Activated T-helper 1 cell treated with anti-CD3 and anti-CD28 coated beads, Interleukin-12 subunit alpha, Interleukin-12 subunit beta, Interleukin-2, Interleukin-4 antibody, amounts not matched to agents 30 ng/mL and 10 ng/mL and 1 ng/mL, durations not matched to agents 14 hours and 24 hours and 36 hours (primary cell): ENCODE measurements at regions of chr21 and their contacts with region 1.

Region 1: DNA sequence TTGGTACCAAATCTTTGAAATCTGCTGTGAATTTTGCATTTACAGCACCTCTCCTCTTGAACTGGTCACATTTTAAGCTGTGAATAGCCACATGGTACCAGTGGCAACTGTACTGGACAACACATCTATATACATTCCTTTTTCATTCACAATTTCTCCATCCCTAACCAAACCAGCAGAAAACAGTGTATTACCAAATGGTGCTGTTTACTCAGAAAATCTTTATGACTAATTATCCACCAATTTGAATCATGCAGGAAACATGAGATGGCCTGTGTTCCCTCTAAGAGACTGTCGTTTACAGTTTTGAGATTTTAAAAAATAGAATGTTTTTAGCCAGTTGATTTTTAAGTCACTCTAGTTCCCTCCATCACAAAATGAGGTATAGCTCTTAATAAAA is 17.6 kb upstream of the CCT8 start:
- DNase-seq: no peak
- H3K4me3 Mint-ChIP-seq: no peak overlapping the region
- H3K27ac Mint-ChIP-seq: peak overlapping the region; percentile 56
- H3K4me1 Mint-ChIP-seq: peaks cover 24% of the 10 kb centered on the region
- H3K27me3 Mint-ChIP-seq: peaks cover 13% of the 10 kb centered on the region

Region 2: GRCh38 chr21:28522014-28522799 is 568.8 kb before region 1 on chr21:
- intact Hi-C with region 1: no loop called
- DNase-seq: no peak
- H3K4me3 Mint-ChIP-seq: no peak overlapping the region
- H3K27ac Mint-ChIP-seq: no peak overlapping the region
- H3K4me1 Mint-ChIP-seq: peaks cover 9% of the 10 kb centered on the region
- H3K27me3 Mint-ChIP-seq: no peaks in the 10 kb centered on the region

Region 3: GRCh38 chr21:28953247-28953646 is 137.8 kb before region 1 on chr21:
- intact Hi-C with region 1: no loop called
- DNase-seq: no peak
- H3K4me3 Mint-ChIP-seq: no peak overlapping the region
- H3K27ac Mint-ChIP-seq: no peak overlapping the region
- H3K4me1 Mint-ChIP-seq: peaks cover 34% of the 10 kb centered on the region
- H3K27me3 Mint-ChIP-seq: no peaks in the 10 kb centered on the region

Region 4: DNA sequence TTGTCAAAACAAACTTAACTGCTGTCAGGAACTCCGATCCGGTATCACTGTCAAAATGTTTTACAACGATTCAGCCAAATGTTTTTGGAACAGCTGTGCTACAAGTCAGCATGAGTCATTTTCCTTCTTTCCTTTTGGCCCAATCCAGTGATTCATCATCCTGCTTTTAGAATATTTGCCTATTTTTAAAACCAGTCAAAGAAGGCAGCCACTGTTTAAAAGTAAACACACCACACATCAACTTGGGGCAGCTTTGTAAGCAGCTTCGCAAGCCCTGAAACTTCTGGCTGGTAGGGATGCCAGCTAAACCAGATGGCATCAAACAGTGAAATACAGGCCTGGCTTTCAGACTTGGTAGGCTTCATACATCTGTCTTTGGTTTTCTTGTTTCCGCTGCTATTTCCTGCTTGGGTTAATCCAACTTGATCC is 54.3 kb after region 1 on chr21:
- intact Hi-C with region 1: loop called (anchors 5 kb)
- DNase-seq: no peak
- H3K4me3 Mint-ChIP-seq: no peak overlapping the region
- H3K27ac Mint-ChIP-seq: no peak overlapping the region
- H3K4me1 Mint-ChIP-seq: peaks cover 24% of the 10 kb centered on the region
- H3K27me3 Mint-ChIP-seq: no peaks in the 10 kb centered on the region

Region 5: GRCh38 chr21:29232601-29233546 is 141.8 kb after region 1 on chr21:
- intact Hi-C with region 1: loop called (anchors 1 kb)
- DNase-seq: no peak
- H3K4me3 Mint-ChIP-seq: no peak overlapping the region
- H3K27ac Mint-ChIP-seq: no peak overlapping the region
- H3K4me1 Mint-ChIP-seq: peaks cover 51% of the 10 kb centered on the region
- H3K27me3 Mint-ChIP-seq: peaks cover 30% of the 10 kb centered on the region

Region 6: GRCh38 chr21:29343519-29343918 is 252.5 kb after region 1 on chr21:
- intact Hi-C with region 1: loop called (anchors 1 kb)
- DNase-seq: no peak
- H3K4me3 Mint-ChIP-seq: no peak overlapping the region
- H3K27ac Mint-ChIP-seq: no peak overlapping the region
- H3K4me1 Mint-ChIP-seq: peaks cover 32% of the 10 kb centered on the region
- H3K27me3 Mint-ChIP-seq: no peaks in the 10 kb centered on the region

Region 7: DNA sequence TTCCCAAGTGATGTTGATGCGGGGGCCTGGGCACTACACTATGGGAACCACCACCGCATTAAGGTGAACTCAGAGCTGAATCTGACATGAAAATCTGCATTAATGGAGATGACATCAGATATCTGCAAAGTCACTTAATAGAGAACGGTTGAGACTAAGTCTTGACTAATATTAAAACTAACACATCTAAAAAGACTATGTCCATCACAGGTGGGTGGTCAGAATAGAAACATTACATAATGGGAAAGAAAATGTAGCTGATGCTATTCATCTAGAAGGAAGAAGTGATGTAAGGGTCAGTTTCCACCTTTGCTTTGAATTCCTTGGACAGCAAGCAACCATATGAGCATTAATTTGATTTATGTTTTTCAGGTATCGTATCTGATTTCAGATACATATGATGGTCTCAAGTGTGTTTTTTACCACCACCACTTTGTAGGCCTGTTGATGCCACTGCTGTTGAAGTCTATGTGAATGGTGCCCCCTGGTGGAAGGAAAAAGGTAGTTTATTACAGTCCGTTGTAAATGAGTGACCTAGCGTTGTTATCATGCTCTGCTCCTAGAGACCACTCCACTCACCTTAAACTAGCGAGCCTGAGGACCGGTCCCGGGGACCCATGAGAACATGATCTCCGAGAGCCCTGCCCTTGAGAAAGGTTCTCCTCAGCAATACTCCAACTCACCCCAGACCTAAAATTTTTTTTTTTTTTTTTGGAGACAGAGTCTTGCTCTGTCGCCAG is 281.2 kb after region 1 on chr21:
- intact Hi-C with region 1: loop called (anchors 1 kb)
- DNase-seq: peak; percentile 39
- H3K4me3 Mint-ChIP-seq: no peak overlapping the region
- H3K27ac Mint-ChIP-seq: no peak overlapping the region
- H3K4me1 Mint-ChIP-seq: peaks cover 30% of the 10 kb centered on the region
- H3K27me3 Mint-ChIP-seq: no peaks in the 10 kb centered on the region

Region 8: DNA sequence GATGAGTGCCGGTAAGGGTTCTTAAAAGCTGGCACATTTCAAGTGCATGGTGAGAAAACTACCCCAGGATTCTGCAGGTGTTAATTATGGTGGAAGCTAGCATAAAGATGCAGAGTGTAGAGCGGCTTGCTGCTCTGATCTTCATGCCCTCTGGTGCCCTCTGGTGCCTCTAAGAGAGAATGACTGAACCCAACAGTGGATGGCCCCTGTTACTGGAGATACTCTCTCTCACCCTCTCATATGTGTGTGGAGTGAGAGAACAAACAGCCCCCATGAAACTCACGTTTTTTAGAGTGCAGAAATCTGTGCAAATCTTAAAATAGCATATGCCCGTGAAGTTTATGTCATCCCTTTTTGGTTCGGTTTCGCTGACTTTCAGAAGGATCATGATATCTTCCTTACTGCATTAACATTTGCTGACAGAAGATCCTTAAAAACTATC is 758.7 kb after region 1 on chr21:
- intact Hi-C with region 1: loop called (anchors 1 kb)
- DNase-seq: peak; percentile 27
- H3K4me3 Mint-ChIP-seq: no peak overlapping the region
- H3K27ac Mint-ChIP-seq: no peak overlapping the region
- H3K4me1 Mint-ChIP-seq: no peaks in the 10 kb centered on the region
- H3K27me3 Mint-ChIP-seq: peaks cover 2% of the 10 kb centered on the region